Naive thymus-derived CD4-positive, alpha-beta T cell (primary cell): ENCODE measurements at regions of chr5 and their contacts with region 1.

Region 1: DNA sequence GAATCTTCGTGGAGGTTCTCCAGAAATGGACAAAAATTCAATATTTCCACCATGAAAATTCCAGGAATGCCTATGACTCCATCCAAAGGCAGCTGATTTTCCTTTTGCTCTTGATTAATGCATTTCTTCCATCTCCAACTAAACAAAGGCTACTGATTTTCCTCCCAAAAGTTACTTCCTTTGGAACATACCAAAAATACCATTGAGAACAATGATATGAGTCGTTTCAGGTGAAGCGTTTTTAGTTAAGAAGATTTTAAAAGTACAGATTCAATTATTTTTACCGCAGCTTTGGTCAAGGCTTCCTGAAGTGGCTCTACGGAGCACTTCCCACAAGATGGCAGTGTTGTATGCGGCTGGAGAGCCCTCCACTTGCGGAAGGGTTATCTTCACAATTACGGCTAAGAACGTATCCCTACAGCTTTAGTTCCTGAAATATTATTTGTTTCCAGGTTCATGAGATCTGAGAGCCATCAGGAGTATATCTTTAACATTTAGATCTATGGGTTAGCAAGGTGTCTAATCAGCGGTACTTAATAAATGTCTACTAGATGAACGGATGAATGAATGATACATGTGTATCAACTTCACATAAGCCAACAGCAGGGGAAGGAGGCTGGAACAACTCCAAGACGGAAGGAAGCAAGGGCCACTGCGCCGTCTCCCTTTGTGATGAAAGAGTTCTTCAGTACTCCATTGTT is 35.9 kb upstream of the ARSB start:
- DNase-seq: peak in 6 of 9 donors; percentile 4 to 25 (median 14)
- ATAC-seq: peak; percentile 79
- H3K4me3 ChIP-seq: no peak overlapping the region
- H3K4me3 Mint-ChIP-seq: peak overlapping the region in 2 of 10 donors; percentile 24 to 44
- H3K27ac ChIP-seq: no peak overlapping the region
- H3K27ac Mint-ChIP-seq: no peak overlapping the region
- H3K4me1 ChIP-seq: no peaks in the 10 kb centered on the region
- H3K4me1 Mint-ChIP-seq: peaks cover 7 to 14% (median 12%) of the 10 kb centered on the region in 7 donors
- H3K27me3 ChIP-seq: peaks cover 0 to 3% of the 10 kb centered on the region in 2 donors
- H3K27me3 Mint-ChIP-seq: peaks cover 56 to 79% (median 63%) of the 10 kb centered on the region in 5 donors

Region 2: GRCh38 chr5:79109527-79110492 is 88.8 kb after region 1 on chr5:
- CTCF ChIA-PET with region 1: interaction called, 3 read pairs
- POLR2A ChIA-PET with region 1: no interaction called
- intact Hi-C with region 1: loop called (anchors 1 kb)
- DNase-seq: peak in 3 of 9 donors; percentile 13 to 29 (median 27)
- ATAC-seq: peak; percentile 75
- H3K4me3 ChIP-seq: no peak overlapping the region
- H3K4me3 Mint-ChIP-seq: no peak overlapping the region
- H3K27ac ChIP-seq: no peak overlapping the region
- H3K27ac Mint-ChIP-seq: no peak overlapping the region
- H3K4me1 ChIP-seq: no peaks in the 10 kb centered on the region
- H3K4me1 Mint-ChIP-seq: peaks cover 0 to 8% (median 0%) of the 10 kb centered on the region in 7 donors
- H3K27me3 ChIP-seq: peaks cover 0 to 8% of the 10 kb centered on the region in 2 donors
- H3K27me3 Mint-ChIP-seq: peaks cover 53 to 80% (median 59%) of the 10 kb centered on the region in 5 donors

Region 3: GRCh38 chr5:79263290-79263689 is 242.3 kb after region 1 on chr5:
- CTCF ChIA-PET with region 1: no interaction called
- POLR2A ChIA-PET with region 1: no interaction called
- intact Hi-C with region 1: no loop called
- DNase-seq: peak in 5 of 9 donors; percentile 13 to 28 (median 20)
- ATAC-seq: peak; percentile 19
- H3K4me3 ChIP-seq: no peak overlapping the region
- H3K4me3 Mint-ChIP-seq: peak overlapping the region in 7 of 10 donors; percentile 16 to 69 (median 47)
- H3K27ac ChIP-seq: no peak overlapping the region
- H3K27ac Mint-ChIP-seq: peak overlapping the region in 4 of 9 donors; percentile 9 to 25 (median 20)
- H3K4me1 ChIP-seq: peaks cover 3 to 19% of the 10 kb centered on the region in 2 donors
- H3K4me1 Mint-ChIP-seq: peaks cover 12 to 81% (median 50%) of the 10 kb centered on the region in 7 donors
- H3K27me3 ChIP-seq: no peaks in the 10 kb centered on the region
- H3K27me3 Mint-ChIP-seq: no peaks in the 10 kb centered on the region

Region 4: GRCh38 chr5:79464695-79465332 is 443.8 kb after region 1 on chr5:
- CTCF ChIA-PET with region 1: no interaction called
- POLR2A ChIA-PET with region 1: no interaction called
- intact Hi-C with region 1: loop called (anchors 1 kb)
- DNase-seq: peak in 5 of 9 donors; percentile 12 to 34 (median 32)
- ATAC-seq: peak; percentile 54
- H3K4me3 ChIP-seq: no peak overlapping the region
- H3K4me3 Mint-ChIP-seq: no peak overlapping the region
- H3K27ac ChIP-seq: no peak overlapping the region
- H3K27ac Mint-ChIP-seq: no peak overlapping the region
- H3K4me1 ChIP-seq: no peaks in the 10 kb centered on the region
- H3K4me1 Mint-ChIP-seq: peaks cover 0 to 2% (median 0%) of the 10 kb centered on the region in 7 donors
- H3K27me3 ChIP-seq: no peaks in the 10 kb centered on the region
- H3K27me3 Mint-ChIP-seq: peaks cover 0 to 9% (median 5%) of the 10 kb centered on the region in 5 donors

Region 5: DNA sequence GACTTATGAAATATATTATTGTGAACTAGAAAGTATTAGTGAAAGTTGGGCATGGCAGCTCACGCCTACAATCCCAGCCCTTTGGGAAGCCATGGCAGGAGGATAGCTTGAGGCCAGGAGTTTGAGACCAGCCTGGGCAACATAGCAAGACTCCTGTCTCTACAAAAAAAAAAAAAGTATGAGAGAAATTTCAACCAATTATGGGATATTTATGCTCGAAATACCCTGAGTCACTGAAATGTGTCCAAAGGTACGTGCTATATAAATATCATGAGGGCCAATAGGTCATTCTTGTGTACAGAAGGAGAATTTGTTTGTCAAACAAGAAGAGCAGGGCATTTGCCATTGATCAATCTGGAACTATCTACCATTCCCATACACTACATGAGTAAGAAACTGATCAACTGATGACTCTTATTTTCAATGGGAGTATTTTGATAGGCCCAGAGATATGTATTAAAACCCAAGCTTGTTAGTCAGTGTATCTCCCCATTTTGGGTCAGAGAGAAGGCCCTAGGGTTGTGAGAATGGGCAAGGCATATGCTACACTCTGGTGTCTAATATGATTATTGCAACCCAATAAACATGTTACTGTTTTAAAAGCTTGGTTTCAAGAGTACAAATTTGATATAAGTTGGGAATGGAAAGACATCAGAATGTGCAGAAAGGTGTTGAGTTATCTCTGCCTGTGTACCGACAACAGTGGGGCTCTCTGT is 514.6 kb after region 1 on chr5:
- CTCF ChIA-PET with region 1: no interaction called
- POLR2A ChIA-PET with region 1: no interaction called
- intact Hi-C with region 1: loop called in 1 of 2 experiments (anchors 5 kb)
- DNase-seq: no peak
- ATAC-seq: no peak
- H3K4me3 ChIP-seq: no peak overlapping the region
- H3K4me3 Mint-ChIP-seq: no peak overlapping the region
- H3K27ac ChIP-seq: no peak overlapping the region
- H3K27ac Mint-ChIP-seq: no peak overlapping the region
- H3K4me1 ChIP-seq: no peaks in the 10 kb centered on the region
- H3K4me1 Mint-ChIP-seq: no peaks in the 10 kb centered on the region
- H3K27me3 ChIP-seq: no peaks in the 10 kb centered on the region
- H3K27me3 Mint-ChIP-seq: peaks cover 3 to 11% (median 5%) of the 10 kb centered on the region in 5 donors

Region 6: GRCh38 chr5:79857714-79858409 is 836.9 kb after region 1 on chr5:
- CTCF ChIA-PET with region 1: no interaction called
- POLR2A ChIA-PET with region 1: no interaction called
- intact Hi-C with region 1: loop called in 1 of 2 experiments (anchors 5 kb)
- DNase-seq: peak; percentile 39 to 83 (median 64)
- ATAC-seq: peak; percentile 79
- H3K4me3 ChIP-seq: no peak overlapping the region
- H3K4me3 Mint-ChIP-seq: no peak overlapping the region
- H3K27ac ChIP-seq: no peak overlapping the region
- H3K27ac Mint-ChIP-seq: no peak overlapping the region
- H3K4me1 ChIP-seq: no peaks in the 10 kb centered on the region
- H3K4me1 Mint-ChIP-seq: peaks cover 0 to 2% (median 0%) of the 10 kb centered on the region in 7 donors
- H3K27me3 ChIP-seq: no peaks in the 10 kb centered on the region
- H3K27me3 Mint-ChIP-seq: peaks cover 0 to 22% (median 0%) of the 10 kb centered on the region in 5 donors

Region 7: GRCh38 chr5:80034962-80035821 is 1014.2 kb after region 1 on chr5 and contains the start of gene THBS4:
- CTCF ChIA-PET with region 1: no interaction called
- POLR2A ChIA-PET with region 1: no interaction called
- intact Hi-C with region 1: no loop called
- DNase-seq: peak in 1 of 9 donors; percentile 6
- ATAC-seq: no peak
- H3K4me3 ChIP-seq: no peak within 1 kb of the TSS
- H3K4me3 Mint-ChIP-seq: peak within 1 kb of the TSS; percentile 52 to 81 (median 68)
- H3K27ac ChIP-seq: no peak within 1 kb of the TSS
- H3K27ac Mint-ChIP-seq: no peak within 1 kb of the TSS
- H3K4me1 ChIP-seq: peaks cover 0 to 11% of the 10 kb centered on the region in 2 donors
- H3K4me1 Mint-ChIP-seq: peaks cover 0 to 27% (median 18%) of the 10 kb centered on the region in 7 donors
- H3K27me3 ChIP-seq: peaks cover 0 to 17% of the 10 kb centered on the region in 2 donors
- H3K27me3 Mint-ChIP-seq: peaks cover 55 to 73% (median 62%) of the 10 kb centered on the region in 5 donors
- total RNA-seq, gene THBS4: 0.53 to 1.2 (median 0.65) TPM